ENCODE measurements at regions of chr3 and their contacts with region 1.

Region 1: GRCh38 chr3:50245831-50246516 is 10.0 kb downstream of the GNAI2 start:
- DNase-seq: peak; percentile 88
- H3K4me3 Mint-ChIP-seq: peak overlapping the region; percentile 82
- H3K27ac Mint-ChIP-seq: peak overlapping the region; percentile 98
- H3K4me1 Mint-ChIP-seq: peaks cover 70% of the 10 kb centered on the region
- H3K27me3 Mint-ChIP-seq: no peaks in the 10 kb centered on the region

Region 2: GRCh38 chr3:50192689-50193141 is 53.3 kb before region 1 on chr3:
- intact Hi-C with region 1: loop called (anchors 1 kb)
- DNase-seq: peak; percentile 72
- H3K4me3 Mint-ChIP-seq: no peak overlapping the region
- H3K27ac Mint-ChIP-seq: no peak overlapping the region
- H3K4me1 Mint-ChIP-seq: peaks cover 6% of the 10 kb centered on the region
- H3K27me3 Mint-ChIP-seq: peaks cover 18% of the 10 kb centered on the region

Region 3: DNA sequence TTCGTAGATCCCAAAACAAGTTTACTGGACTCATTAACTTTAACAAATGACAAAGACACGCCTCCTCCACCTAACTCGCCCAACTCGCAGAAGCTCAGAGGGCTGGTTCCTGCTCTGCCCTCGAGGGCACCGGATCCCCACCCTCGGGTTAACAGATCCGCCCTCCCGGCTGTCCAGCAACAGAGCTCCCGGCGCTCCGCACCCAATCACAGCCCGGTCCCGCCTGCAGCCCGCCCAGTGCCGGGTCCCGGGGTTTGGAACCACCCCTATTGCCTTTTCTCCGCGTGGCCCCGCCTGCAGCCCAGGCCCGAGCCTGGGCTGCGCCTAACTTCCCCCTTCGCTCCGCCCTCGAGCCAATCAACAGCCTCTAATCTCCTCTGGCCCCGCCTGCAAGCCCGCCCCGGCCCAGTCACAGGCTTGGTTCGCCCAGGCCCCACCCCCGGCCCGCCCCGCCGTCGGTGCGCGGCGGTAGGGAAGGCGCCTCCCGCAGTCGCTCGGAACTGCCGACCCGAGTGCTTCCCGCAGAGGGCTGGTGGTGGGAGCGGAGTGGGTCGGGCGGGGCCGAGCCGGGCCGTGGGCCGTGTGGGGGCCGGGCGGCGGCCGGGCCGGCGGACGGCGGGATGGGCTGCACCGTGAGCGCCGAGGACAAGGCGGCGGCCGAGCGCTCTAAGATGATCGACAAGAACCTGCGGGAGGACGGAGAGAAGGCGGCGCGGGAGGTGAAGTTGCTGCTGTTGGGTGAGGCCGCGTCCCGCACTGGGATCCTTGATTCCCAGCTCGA is 10.1 kb before region 1 on chr3 and contains the start of gene GNAI2:
- intact Hi-C with region 1: loop called (anchors 1 kb)
- DNase-seq: peak; percentile 99
- H3K4me3 Mint-ChIP-seq: peak within 1 kb of the TSS; percentile 99
- H3K27ac Mint-ChIP-seq: peak within 1 kb of the TSS; percentile 94
- H3K4me1 Mint-ChIP-seq: peaks cover 32% of the 10 kb centered on the region
- H3K27me3 Mint-ChIP-seq: no peaks in the 10 kb centered on the region
- total RNA-seq, gene GNAI2: 237 and 238 TPM in 2 replicates

Region 4: DNA sequence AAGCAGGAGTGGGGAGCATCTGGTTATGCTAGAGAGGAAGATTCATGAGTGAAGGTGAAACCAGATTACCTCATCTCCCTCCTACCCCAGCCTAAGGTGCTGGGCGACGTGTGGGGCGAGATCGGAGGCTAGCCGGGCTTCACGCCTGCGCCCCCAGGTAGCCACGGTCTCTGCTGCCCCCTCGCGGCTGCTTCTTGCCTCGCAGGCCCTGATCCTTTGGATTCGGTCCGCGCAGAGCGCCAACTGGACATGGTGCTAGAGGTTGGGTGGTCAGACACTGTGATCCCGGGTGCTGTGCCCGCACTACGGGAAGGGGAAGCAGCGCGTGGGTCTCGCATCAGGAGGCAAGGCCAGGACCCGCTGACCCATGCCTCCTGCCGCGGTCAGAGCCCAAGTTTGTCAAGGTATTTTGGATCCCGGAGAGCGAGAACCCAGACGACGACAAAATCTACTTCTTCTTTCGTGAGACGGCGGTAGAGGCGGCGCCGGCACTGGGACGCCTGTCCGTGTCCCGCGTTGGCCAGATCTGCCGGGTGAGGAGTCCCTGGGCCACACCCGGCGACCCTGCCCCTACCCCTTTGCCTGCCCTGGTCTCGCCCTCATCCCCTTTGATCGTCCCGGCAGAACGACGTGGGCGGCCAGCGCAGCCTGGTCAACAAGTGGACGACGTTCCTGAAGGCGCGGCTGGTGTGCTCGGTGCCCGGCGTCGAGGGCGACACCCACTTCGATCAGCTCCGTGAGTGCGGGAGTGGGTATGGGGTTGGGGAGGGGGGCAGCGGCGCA is 27.1 kb after region 1 on chr3:
- intact Hi-C with region 1: loop called (anchors 1 kb)
- DNase-seq: peak; percentile 82
- H3K4me3 Mint-ChIP-seq: peak overlapping the region; percentile 71
- H3K27ac Mint-ChIP-seq: no peak overlapping the region
- H3K4me1 Mint-ChIP-seq: peaks cover 21% of the 10 kb centered on the region
- H3K27me3 Mint-ChIP-seq: peaks cover 39% of the 10 kb centered on the region